ENCODE measurements at regions of chr9 and their contacts with region 1.

Region 1: GRCh38 chr9:20043035-20043434 is 254.2 kb upstream of the SLC24A2 start:
- DNase-seq: no peak
- H3K4me3 ChIP-seq: no peak overlapping the region
- H3K27ac ChIP-seq: no peak overlapping the region
- H3K4me1 ChIP-seq: no peaks in the 10 kb centered on the region
- H3K27me3 ChIP-seq: peaks cover 12% of the 10 kb centered on the region; the same call in 1 of the 2 replicates

Region 2: DNA sequence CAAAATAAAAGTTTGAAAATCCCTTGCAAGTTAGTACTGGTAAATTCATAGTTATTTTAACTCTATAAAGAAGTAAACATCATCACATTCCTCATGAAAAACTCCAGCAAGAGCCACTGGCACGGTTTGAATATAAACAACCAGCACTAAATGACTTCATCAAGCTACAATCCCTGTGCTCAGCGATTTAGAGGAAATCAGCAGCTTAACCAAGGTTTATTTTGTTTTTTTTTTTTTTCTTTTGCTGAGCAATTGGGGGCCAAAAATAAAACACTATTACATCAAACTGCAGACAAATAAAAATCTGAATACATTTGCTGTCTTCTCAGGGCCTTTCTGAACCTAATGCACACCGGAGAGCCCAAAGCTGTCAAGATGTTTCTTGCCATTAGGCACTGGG is 148.0 kb before region 1 on chr9:
- in situ Hi-C with region 1: loop called (anchors 25 kb)
- DNase-seq: peak; percentile 43
- H3K4me3 ChIP-seq: no peak overlapping the region
- H3K27ac ChIP-seq: no peak overlapping the region
- H3K4me1 ChIP-seq: no peaks in the 10 kb centered on the region
- H3K27me3 ChIP-seq: no peaks in the 10 kb centered on the region

Region 3: GRCh38 chr9:19925817-19926503 is 117.1 kb before region 1 on chr9:
- in situ Hi-C with region 1: no loop called
- DNase-seq: peak; percentile 83
- H3K4me3 ChIP-seq: peak overlapping the region; percentile 72
- H3K27ac ChIP-seq: no peak overlapping the region
- H3K4me1 ChIP-seq: 0 out of 2 replicates have a peak, but pooled peaks cover 3% of the 10 kb centered on the region
- H3K27me3 ChIP-seq: no peaks in the 10 kb centered on the region

Region 4: DNA sequence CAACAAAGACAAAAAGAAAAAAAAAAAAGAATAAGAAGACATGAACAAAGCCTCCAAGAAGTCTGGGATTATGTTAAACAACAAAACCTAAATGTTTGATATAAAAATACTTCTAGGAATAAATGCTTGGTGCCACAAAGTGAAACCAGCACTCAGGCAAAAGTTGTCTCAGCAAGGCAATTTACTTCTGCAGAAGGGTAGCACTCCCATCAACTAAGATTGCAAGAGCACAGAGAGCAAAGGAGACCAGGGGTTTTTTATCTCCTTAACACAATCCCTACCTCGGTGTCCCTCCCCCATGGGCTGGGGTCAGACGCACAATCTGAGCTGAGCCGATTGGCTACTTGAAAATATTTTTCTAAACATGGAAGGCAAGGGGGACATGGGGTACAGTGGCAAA is 127.1 kb after region 1 on chr9:
- in situ Hi-C with region 1: no loop called
- DNase-seq: no peak
- H3K4me3 ChIP-seq: no peak overlapping the region
- H3K27ac ChIP-seq: no peak overlapping the region
- H3K4me1 ChIP-seq: no peaks in the 10 kb centered on the region
- H3K27me3 ChIP-seq: peaks cover 10% of the 10 kb centered on the region; the same call in 1 of the 2 replicates